Activated naive CD4-positive, alpha-beta T cell treated with anti-CD3 and anti-CD28 coated beads for 36 hours (primary cell): ENCODE measurements at regions of chr1 and their contacts with region 1.

Region 1: DNA sequence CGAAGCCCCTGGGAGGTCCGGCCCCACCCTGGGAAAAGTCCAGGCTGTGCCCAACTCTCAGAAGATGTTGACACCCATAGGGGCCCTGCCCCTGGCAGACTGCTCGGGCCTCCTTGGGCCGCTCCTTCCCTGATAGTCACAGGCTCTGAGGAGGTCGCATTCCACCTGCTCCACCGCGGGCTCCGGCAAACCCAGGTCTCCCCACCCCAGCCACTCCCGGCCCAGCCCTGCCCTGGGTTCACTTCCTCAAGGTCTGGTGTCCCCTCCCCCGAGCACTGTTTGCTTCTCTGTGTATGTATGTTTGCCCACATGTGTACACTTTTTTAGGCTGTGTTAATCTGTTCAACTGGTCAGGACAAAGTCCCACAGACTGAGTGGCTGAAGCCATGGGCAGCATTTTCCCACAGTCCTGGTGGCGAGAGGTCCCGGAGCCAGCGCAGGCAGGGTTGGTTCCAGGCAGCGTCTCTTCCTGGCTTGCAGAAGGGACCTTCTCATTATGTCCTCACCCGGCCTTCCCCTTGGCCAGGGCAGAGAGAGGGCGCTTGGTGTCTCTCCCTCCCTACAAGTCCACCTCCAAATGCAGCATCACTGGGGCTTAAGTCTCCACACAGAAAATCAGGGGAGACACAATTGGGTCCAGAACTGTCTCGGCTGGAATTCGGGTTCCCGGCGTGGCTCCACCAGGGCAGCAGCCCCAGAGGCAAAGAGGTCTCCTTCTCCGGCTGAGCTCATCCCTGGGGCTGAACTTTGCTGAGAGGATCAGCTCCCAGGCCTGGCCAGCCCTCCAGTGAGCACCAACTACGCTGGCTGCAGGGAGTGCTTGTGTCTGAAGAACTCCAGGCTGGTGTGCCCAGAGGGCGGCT is 10.5 kb upstream of the PRXL2B start:
- DNase-seq: no peak
- H3K4me3 Mint-ChIP-seq: no peak overlapping the region
- H3K27ac Mint-ChIP-seq: peak overlapping the region; percentile 97
- H3K4me1 Mint-ChIP-seq: peaks cover 40% of the 10 kb centered on the region
- H3K27me3 Mint-ChIP-seq: no peaks in the 10 kb centered on the region

Region 2: DNA sequence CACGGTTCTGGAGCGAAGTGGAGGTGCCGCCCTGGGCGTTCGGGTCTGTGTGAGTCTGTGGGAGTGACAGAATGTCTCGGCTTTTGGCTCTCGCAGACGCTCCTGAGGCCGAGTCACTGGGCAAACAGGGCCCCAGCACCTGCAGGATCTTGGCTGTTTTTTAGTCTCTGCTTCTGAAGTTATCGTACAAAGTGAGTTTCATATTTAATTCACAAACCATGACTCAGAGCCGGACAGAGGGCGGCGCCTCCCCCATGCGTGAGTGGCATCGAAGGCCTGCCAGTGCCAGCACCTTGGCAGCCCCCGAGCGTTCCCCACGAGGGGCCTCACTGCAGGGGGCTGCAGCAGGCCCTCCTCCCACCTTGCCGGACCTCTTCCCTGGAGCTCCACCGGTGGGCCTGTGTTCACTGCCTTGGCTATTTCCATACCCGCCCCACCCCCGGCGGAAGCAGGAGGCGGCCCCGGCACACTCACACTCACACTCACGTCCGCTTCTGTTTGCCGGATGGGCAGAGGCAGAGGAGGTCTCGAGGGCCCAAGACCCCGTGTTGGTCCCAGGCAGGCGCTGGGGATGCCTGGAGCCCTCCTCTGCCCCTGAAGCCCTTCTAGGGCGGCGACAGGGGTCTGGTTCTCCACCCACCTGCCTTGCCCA is 241.0 kb before region 1 on chr1:
- CTCF ChIA-PET with region 1: no interaction called
- intact Hi-C with region 1: no loop called
- DNase-seq: no peak
- H3K4me3 Mint-ChIP-seq: no peak overlapping the region
- H3K27ac Mint-ChIP-seq: no peak overlapping the region
- H3K4me1 Mint-ChIP-seq: no peaks in the 10 kb centered on the region
- H3K27me3 Mint-ChIP-seq: no peaks in the 10 kb centered on the region

Region 3: DNA sequence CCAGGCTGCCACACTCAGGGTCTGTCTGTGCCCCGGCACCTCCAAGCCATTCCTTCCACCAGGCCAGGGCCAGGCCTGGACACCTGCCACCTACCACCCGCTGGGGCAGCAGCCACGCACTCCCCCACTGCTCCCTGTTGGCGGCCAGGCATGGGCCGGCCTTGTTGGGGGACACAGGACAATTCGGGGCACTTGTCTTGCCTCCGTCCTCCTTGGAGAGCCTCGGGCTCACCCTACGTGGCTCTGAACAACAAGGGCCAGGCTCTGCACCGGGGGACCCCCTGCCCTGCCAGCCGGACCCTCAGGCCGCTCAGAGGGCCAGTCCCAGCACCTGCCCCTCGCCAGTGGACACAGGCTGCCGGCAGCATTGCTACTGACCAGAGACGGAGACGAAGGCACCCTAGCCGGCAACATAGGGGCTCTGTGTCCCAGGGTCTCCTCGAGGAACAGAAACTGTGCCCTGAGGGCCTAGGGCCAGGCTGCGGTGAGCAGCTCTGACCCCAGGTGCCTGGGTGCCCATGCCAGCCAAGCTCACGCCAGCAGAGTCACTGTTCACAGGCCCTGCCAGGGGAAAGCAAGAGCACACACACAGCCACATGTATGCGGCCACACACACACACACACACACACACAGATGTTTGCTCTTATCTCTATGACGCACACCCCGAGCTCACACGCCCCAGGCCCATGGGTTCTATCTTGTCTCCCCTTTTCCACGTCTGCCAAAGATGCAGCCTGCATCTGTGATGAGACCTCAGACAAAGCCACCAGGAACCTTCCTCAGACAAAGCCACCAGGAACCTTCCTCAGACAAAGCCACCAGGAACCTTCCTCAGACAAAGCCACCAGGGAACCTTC is 230.6 kb before region 1 on chr1:
- CTCF ChIA-PET with region 1: no interaction called
- intact Hi-C with region 1: no loop called
- DNase-seq: no peak
- H3K4me3 Mint-ChIP-seq: no peak overlapping the region
- H3K27ac Mint-ChIP-seq: no peak overlapping the region
- H3K4me1 Mint-ChIP-seq: no peaks in the 10 kb centered on the region
- H3K27me3 Mint-ChIP-seq: no peaks in the 10 kb centered on the region

Region 4: GRCh38 chr1:2525920-2526823 is 49.9 kb before region 1 on chr1 and contains the start of gene PANK4:
- CTCF ChIA-PET with region 1: no interaction called
- intact Hi-C with region 1: loop called (anchors 1 kb)
- DNase-seq: peak; percentile 90
- H3K4me3 Mint-ChIP-seq: peak within 1 kb of the TSS; percentile 87
- H3K27ac Mint-ChIP-seq: peak within 1 kb of the TSS; percentile 97
- H3K4me1 Mint-ChIP-seq: peaks cover 47% of the 10 kb centered on the region
- H3K27me3 Mint-ChIP-seq: peaks cover 3% of the 10 kb centered on the region
- total RNA-seq, gene PANK4: 46.6 to 51.4 TPM

Region 5: DNA sequence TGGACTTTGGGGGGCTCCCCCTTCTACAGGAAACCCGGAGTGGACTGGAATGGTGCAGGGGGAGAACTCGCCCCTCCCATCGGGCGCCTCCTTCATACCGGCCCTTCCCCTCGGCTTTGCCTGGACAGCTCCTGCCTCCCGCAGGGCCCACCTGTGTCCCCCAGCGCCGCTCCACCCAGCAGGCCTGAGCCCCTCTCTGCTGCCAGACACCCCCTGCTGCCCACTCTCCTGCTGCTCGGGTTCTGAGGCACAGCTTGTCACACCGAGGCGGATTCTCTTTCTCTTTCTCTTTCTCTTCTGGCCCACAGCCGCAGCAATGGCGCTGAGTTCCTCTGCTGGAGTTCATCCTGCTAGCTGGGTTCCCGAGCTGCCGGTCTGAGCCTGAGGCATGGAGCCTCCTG is 19.8 kb before region 1 on chr1 and contains the start of gene TNFRSF14:
- CTCF ChIA-PET with region 1: interaction called, 10 read pairs
- intact Hi-C with region 1: loop called (anchors 1 kb)
- DNase-seq: peak; percentile 81
- H3K4me3 Mint-ChIP-seq: peak within 1 kb of the TSS; percentile 93
- H3K27ac Mint-ChIP-seq: peak within 1 kb of the TSS; percentile 99
- H3K4me1 Mint-ChIP-seq: peaks cover 31% of the 10 kb centered on the region
- H3K27me3 Mint-ChIP-seq: no peaks in the 10 kb centered on the region
- total RNA-seq, gene TNFRSF14: 120 to 123 TPM

Region 6: GRCh38 chr1:2561898-2562545 is 14.0 kb before region 1 on chr1:
- CTCF ChIA-PET with region 1: interaction called, 10 read pairs
- intact Hi-C with region 1: no loop called
- DNase-seq: peak; percentile 38
- H3K4me3 Mint-ChIP-seq: no peak overlapping the region
- H3K27ac Mint-ChIP-seq: no peak overlapping the region
- H3K4me1 Mint-ChIP-seq: peaks cover 15% of the 10 kb centered on the region
- H3K27me3 Mint-ChIP-seq: no peaks in the 10 kb centered on the region